CD8-positive, alpha-beta T cell (primary cell): ENCODE measurements at regions of chr17 and their contacts with region 1.

Region 1: DNA sequence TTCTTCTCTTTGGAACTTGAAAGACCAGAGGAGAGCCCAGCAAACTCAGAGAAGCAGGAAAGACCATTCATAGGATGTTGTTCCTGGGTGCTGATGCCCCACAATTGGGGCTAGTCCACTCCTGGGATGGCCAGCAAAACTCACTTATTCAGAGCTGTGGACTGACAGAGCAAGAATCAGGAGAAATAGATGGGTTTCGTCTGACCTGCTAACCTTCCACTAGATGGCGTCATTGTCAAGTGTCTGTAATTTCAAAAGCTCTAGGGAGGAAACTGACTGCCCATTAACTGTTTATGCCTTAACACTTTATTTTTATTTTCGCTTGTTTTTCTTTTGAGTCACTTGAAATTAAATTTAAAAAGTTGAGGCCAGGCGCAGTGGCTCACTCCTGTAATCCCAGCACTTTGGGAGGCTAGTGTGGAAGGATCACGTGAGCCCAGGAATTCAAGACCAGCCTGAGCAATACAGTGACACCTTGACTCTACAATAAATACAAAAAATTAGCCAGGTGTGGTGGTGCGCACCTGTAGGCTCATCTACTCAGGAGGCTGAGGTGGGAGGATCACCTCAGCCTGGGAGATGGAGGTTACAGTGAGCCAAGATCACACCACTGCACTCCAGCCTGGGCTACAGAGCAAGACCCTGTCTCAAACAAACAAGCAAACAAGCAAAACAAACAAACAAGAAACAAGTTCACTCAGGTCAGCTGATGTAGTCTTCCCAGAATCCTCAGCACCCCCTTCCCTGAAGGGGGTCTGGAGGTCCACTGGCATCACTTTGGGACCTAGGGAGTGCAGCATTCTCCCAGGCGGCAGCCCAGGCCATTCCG is 28.6 kb upstream of the MILR1 start:
- DNase-seq: peak in 5 of 9 experiments; percentile 27 to 85 (median 62)
- ATAC-seq: peak; percentile 88
- H3K4me3 ChIP-seq: no peak overlapping the region
- H3K4me3 Mint-ChIP-seq: no peak overlapping the region
- H3K27ac ChIP-seq: no peak overlapping the region
- H3K27ac Mint-ChIP-seq: no peak overlapping the region
- H3K4me1 ChIP-seq: peaks cover 4% of the 10 kb centered on the region
- H3K4me1 Mint-ChIP-seq: peaks cover 2% of the 10 kb centered on the region
- H3K27me3 ChIP-seq: no peaks in the 10 kb centered on the region
- H3K27me3 Mint-ChIP-seq: no peaks in the 10 kb centered on the region
- CTCF ChIP-seq: peak; percentile 80

Region 2: GRCh38 chr17:64306850-64307463 is 113.4 kb before region 1 on chr17:
- CTCF ChIA-PET with region 1: interaction called, 93 read pairs
- POLR2A ChIA-PET with region 1: no interaction called
- intact Hi-C with region 1: loop called (anchors 1 kb)
- DNase-seq: peak; percentile 31 to 83 (median 71)
- ATAC-seq: peak; percentile 57
- H3K4me3 ChIP-seq: no peak overlapping the region
- H3K4me3 Mint-ChIP-seq: no peak overlapping the region
- H3K27ac ChIP-seq: no peak overlapping the region
- H3K27ac Mint-ChIP-seq: no peak overlapping the region
- H3K4me1 ChIP-seq: no peaks in the 10 kb centered on the region
- H3K4me1 Mint-ChIP-seq: peaks cover 2% of the 10 kb centered on the region
- H3K27me3 ChIP-seq: no peaks in the 10 kb centered on the region
- H3K27me3 Mint-ChIP-seq: peaks cover 2% of the 10 kb centered on the region
- CTCF ChIP-seq: peak; percentile 95

Region 3: DNA sequence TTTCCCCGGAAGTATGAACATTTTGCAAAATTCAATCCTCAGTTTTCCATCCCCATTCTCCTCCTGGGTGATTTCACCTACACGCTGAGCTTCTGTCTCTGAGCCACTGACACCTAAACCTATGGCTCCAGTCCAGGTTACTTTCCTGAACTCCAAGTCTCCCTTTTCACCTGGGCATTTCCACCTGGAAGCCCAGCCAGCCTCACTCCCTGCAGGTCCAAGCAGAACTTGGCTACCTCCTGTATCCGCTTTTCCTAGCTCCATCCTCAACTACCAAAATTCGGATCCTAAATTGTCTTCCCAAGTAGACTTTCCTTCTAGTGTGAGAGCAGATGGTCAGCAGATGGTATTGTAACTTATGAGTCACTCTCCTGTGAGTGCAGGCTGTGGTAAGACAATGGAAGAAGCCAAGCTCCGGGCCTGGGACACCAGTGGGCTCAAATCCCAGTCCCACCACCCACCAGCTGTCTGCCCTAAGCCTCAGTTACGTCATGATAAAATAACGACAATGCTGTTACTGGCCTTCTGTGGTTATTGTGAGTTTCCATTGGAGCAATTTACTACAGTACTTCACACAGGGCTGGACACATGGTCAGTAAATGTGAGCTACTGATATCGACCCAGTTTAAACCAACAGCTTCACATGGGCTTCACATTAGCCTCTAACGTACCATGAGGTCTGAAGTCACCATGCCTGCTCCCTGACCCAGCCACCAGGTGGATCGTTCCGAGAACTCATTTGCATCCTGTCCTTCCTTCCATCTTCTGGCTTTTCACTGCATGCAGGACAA is 63.0 kb before region 1 on chr17:
- CTCF ChIA-PET with region 1: interaction called, 14 read pairs
- POLR2A ChIA-PET with region 1: no interaction called
- intact Hi-C with region 1: no loop called
- DNase-seq: no peak
- ATAC-seq: no peak
- H3K4me3 ChIP-seq: no peak overlapping the region
- H3K4me3 Mint-ChIP-seq: no peak overlapping the region
- H3K27ac ChIP-seq: no peak overlapping the region
- H3K27ac Mint-ChIP-seq: peak overlapping the region; percentile 77
- H3K4me1 ChIP-seq: peaks cover 8% of the 10 kb centered on the region
- H3K4me1 Mint-ChIP-seq: peaks cover 21% of the 10 kb centered on the region
- H3K27me3 ChIP-seq: no peaks in the 10 kb centered on the region
- H3K27me3 Mint-ChIP-seq: no peaks in the 10 kb centered on the region
- CTCF ChIP-seq: no peak

Region 4: DNA sequence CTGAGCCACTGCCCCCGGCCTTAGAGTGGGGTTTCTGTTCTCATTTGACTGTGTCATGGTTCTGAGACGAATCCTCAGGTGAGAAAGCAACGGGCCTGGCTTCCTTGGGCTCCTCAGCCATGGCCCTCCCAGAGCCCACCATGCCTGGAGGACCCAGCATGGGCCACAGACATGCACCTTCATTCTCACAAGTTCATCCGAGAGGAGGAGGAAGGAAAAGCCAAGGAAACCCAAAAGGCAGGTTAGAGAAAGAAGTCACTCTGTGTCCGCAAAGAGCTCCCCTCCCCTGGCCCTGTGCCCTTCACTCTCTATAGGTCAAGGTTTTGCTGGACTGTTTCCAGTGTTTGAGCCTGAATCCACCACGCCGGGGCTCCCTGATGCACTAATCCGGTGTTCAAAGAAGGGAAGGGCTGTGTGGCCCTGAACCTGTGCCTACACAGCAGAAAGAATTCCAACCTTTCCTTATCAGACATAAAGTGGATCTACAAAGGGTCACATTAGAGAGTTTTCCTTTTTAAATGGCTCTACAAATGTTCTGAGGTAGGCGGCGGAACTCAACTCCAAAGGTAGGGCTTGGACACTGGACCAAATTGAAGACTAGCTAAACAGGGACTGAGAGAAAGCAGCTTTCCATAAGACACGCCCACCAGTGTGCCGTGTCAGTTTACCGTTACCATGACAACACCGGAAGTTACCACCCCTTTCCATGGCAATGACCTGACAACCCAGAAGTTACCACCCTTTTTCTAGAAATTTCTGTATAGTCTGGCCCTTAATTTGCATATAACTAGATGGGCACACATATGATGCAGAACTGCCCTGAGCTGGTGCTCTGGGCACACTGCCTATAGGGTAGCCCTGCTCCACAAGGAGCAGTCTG is 13.8 kb before region 1 on chr17:
- CTCF ChIA-PET with region 1: interaction called, 17 read pairs
- POLR2A ChIA-PET with region 1: interaction called, 3 read pairs
- intact Hi-C with region 1: no loop called
- DNase-seq: peak in 2 of 9 experiments; percentile 32 to 51
- ATAC-seq: no peak
- H3K4me3 ChIP-seq: no peak overlapping the region
- H3K4me3 Mint-ChIP-seq: no peak overlapping the region
- H3K27ac ChIP-seq: no peak overlapping the region
- H3K27ac Mint-ChIP-seq: peak overlapping the region; percentile 11
- H3K4me1 ChIP-seq: peaks cover 10% of the 10 kb centered on the region
- H3K4me1 Mint-ChIP-seq: peaks cover 16% of the 10 kb centered on the region
- H3K27me3 ChIP-seq: no peaks in the 10 kb centered on the region
- H3K27me3 Mint-ChIP-seq: no peaks in the 10 kb centered on the region
- CTCF ChIP-seq: no peak

Region 5: DNA sequence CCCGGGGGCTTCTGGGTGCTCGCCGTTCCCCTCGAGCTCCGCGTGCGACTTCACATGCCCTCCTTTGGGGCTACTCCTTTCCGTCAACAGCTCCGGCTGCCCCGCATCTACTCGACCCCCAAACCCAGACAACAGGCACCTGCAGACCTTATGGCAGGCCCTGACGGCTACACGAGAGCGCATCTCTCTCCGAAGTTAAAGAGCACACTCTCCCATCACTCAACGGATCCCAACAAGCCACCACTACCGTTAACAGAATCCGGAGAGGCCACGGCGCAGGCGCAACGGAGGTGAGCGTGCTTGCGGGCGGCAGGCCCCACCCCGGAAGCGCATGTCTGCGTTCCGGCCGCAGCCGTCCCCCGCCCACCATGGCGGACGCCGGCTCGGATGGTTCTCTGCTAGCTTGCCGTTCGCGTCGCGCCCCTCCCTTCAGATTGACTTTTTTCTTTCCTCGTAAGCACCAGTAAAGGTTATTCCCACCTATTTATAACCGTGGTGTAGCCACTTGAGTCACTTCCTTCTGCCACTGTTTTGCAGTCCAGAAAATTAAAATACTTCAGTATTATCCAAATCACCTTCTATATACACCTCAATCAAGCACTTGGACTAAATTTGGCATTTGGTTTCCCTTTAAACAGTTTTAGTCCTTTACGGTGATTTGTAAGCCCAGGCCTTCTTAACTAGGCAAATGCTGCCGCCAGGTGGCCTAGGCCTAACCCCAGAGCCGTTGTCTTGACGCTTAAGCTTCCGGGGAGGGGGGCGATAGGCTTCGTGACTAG is 76.6 kb after region 1 on chr17 and contains the start of gene POLG2:
- CTCF ChIA-PET with region 1: interaction called, 246 read pairs
- POLR2A ChIA-PET with region 1: interaction called, 14 read pairs
- intact Hi-C with region 1: no loop called
- DNase-seq: peak; percentile 88 to 98 (median 96)
- ATAC-seq: peak; percentile 78
- H3K4me3 ChIP-seq: peak within 1 kb of the TSS; percentile 84 to 85
- H3K4me3 Mint-ChIP-seq: peak within 1 kb of the TSS; percentile 99
- H3K27ac ChIP-seq: peak within 1 kb of the TSS; percentile 65 to 82
- H3K27ac Mint-ChIP-seq: peak within 1 kb of the TSS; percentile 98
- H3K4me1 ChIP-seq: peaks cover 40% of the 10 kb centered on the region
- H3K4me1 Mint-ChIP-seq: peaks cover 83% of the 10 kb centered on the region
- H3K27me3 ChIP-seq: no peaks in the 10 kb centered on the region
- H3K27me3 Mint-ChIP-seq: no peaks in the 10 kb centered on the region
- CTCF ChIP-seq: peak; percentile 54
- total RNA-seq, gene POLG2: 28.1 to 32.7 TPM

Region 6: DNA sequence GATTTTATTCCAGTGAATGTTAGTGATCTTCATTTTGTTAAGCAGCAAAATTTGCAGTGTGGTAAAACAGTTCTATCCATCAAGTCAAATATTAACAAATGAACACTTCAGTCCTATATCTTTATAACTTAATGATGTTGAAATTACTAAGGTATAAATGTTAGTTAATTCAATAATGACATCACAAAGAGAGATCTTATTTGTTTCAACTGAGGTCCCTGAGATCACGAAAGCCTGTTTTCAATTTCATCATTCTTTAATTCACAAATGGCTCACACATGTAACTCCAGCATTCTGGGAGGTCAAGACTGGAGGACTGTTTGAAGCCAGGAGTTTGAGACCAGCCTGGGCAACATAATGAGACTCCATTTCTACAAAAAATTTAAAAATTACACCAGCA is 227.9 kb after region 1 on chr17:
- CTCF ChIA-PET with region 1: interaction called, 50 read pairs
- POLR2A ChIA-PET with region 1: no interaction called
- intact Hi-C with region 1: loop called (anchors 1 kb)
- DNase-seq: no peak
- ATAC-seq: no peak
- H3K4me3 ChIP-seq: no peak overlapping the region
- H3K4me3 Mint-ChIP-seq: no peak overlapping the region
- H3K27ac ChIP-seq: no peak overlapping the region
- H3K27ac Mint-ChIP-seq: no peak overlapping the region
- H3K4me1 ChIP-seq: peaks cover 7% of the 10 kb centered on the region
- H3K4me1 Mint-ChIP-seq: peaks cover 51% of the 10 kb centered on the region
- H3K27me3 ChIP-seq: no peaks in the 10 kb centered on the region
- H3K27me3 Mint-ChIP-seq: no peaks in the 10 kb centered on the region
- CTCF ChIP-seq: no peak

Region 7: DNA sequence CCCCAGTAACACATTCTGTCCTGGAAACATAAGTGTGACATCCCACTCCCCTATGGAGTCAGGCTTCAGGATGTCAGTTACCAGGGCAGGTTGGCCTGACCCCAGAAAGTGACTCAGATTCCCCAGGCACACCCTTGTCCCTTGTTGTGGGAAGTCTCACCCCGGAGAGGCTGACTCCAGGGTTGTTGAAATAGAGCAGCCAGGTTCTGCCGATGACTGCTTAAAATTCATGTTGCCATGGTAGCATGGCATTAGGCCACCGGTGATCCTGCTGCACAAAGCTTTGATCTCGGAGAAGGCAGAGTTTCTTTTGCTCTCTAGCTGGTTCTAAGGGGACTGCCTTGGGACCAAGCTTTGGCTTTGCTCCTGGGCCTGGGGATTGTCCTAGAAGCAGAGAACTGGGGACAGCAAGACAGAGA is 823.5 kb after region 1 on chr17:
- CTCF ChIA-PET with region 1: no interaction called
- POLR2A ChIA-PET with region 1: no interaction called
- intact Hi-C with region 1: no loop called
- DNase-seq: no peak
- ATAC-seq: no peak
- H3K4me3 ChIP-seq: no peak overlapping the region
- H3K4me3 Mint-ChIP-seq: no peak overlapping the region
- H3K27ac ChIP-seq: no peak overlapping the region
- H3K27ac Mint-ChIP-seq: no peak overlapping the region
- H3K4me1 ChIP-seq: no peaks in the 10 kb centered on the region
- H3K4me1 Mint-ChIP-seq: no peaks in the 10 kb centered on the region
- H3K27me3 ChIP-seq: no peaks in the 10 kb centered on the region
- H3K27me3 Mint-ChIP-seq: peaks cover 2% of the 10 kb centered on the region
- CTCF ChIP-seq: no peak